HCT116 (cell line): ENCODE measurements at regions of chr5 and their contacts with region 1.

Region 1: DNA sequence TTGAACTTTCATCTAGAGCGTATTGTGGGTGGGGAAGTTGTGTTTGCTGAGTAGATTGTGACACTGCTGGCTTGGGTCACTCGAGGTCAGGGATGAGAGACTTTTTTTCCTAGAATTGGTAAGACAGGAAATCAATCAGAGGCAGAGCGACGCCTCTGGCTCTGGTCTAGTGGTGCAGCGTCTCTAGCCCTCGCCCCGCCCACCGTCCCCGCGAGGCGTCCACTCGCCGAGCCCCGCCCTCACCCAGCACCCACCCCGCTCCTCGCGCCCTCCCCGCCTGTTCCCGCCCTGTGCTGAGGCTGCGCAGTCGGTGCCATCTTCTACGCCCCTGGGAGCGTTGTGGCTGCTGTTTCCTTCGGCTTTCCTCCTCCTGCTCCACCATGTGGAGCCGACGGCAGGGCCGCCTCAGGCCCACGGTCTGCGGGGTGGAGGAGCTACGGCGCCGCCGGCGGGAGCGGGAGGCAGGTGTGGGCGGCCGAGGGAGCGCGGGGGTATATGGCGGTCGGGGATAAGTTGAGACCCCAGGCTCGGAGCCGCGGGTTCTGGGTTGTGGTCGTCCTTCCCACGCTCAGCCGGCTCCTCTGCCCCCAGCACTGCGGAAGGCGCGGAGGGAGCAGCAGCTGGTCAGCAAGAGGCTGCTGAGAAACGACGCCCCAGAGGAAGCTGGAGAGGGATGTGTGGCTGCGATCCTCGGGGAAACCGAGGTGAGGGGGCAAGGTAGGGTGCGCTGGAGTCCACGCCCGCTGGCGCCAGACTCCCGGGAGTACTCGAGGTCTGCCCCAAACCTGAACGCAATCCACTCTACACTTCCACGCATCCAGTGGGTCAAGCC is at the start of gene TMCO6:
- DNase-seq: peak; percentile 73
- ATAC-seq: peak; percentile 94
- H3K4me3 ChIP-seq: peak within 1 kb of the TSS; percentile 80 to 88
- H3K27ac ChIP-seq: peak within 1 kb of the TSS; percentile 84
- H3K4me1 ChIP-seq: peaks cover 4 to 11% of the 10 kb centered on the region in 2 experiments; a peak in 3 of 4 replicates
- H3K27me3 ChIP-seq: no peaks in the 10 kb centered on the region
- CTCF ChIP-seq: peak in 2 of 3 experiments; percentile 57; a peak in 4 of 6 replicates
- POLR2A ChIP-seq: peak; percentile 68
- RAD21 ChIP-seq: no peak
- total RNA-seq, gene TMCO6: 28.0 TPM

Region 2: GRCh38 chr5:140372971-140373487 is 266.3 kb before region 1 on chr5:
- CTCF ChIA-PET with region 1: interaction called, 5 read pairs
- POLR2A ChIA-PET with region 1: no interaction called
- RAD21 ChIA-PET with region 1: no interaction called
- intact Hi-C with region 1: loop called (anchors 5 kb)
- DNase-seq: peak; percentile 71
- ATAC-seq: peak; percentile 94
- H3K4me3 ChIP-seq: no peak overlapping the region
- H3K27ac ChIP-seq: no peak overlapping the region
- H3K4me1 ChIP-seq: peaks cover 5 to 10% of the 10 kb centered on the region in 2 experiments; a peak in 3 of 4 replicates
- H3K27me3 ChIP-seq: no peaks in the 10 kb centered on the region
- CTCF ChIP-seq: peak; percentile 68 to 88 (median 80); a peak in 5 of 6 replicates
- POLR2A ChIP-seq: no peak
- RAD21 ChIP-seq: peak; percentile 93

Region 3: GRCh38 chr5:140564196-140565023 is 75.0 kb before region 1 on chr5 and contains the starts of genes APBB3 and SLC35A4:
- CTCF ChIA-PET with region 1: interaction called, 3 read pairs
- POLR2A ChIA-PET with region 1: no interaction called
- RAD21 ChIA-PET with region 1: no interaction called
- intact Hi-C with region 1: loop called (anchors 5 kb)
- DNase-seq: peak; percentile 95
- ATAC-seq: peak; percentile 89
- H3K4me3 ChIP-seq: peak within 1 kb of the TSS; percentile 86 to 88
- H3K27ac ChIP-seq: peak within 1 kb of the TSS; percentile 63
- H3K4me1 ChIP-seq: peaks cover 7 to 19% of the 10 kb centered on the region in 2 experiments; a peak in 3 of 4 replicates
- H3K27me3 ChIP-seq: no peaks in the 10 kb centered on the region
- CTCF ChIP-seq: no peak
- POLR2A ChIP-seq: peak; percentile 54
- RAD21 ChIP-seq: no peak
- total RNA-seq, gene APBB3: 28.4 TPM
- total RNA-seq, gene SLC35A4: 37.5 TPM

Region 4: GRCh38 chr5:140575309-140575708 is 64.1 kb before region 1 on chr5:
- CTCF ChIA-PET with region 1: no interaction called
- POLR2A ChIA-PET with region 1: no interaction called
- RAD21 ChIA-PET with region 1: interaction called in 1 of 2 experiments, 3 read pairs
- intact Hi-C with region 1: loop called (anchors 5 kb)
- DNase-seq: peak; percentile 19
- ATAC-seq: peak; percentile 75
- H3K4me3 ChIP-seq: no peak overlapping the region
- H3K27ac ChIP-seq: no peak overlapping the region
- H3K4me1 ChIP-seq: no peaks in the 10 kb centered on the region
- H3K27me3 ChIP-seq: no peaks in the 10 kb centered on the region
- CTCF ChIP-seq: peak; percentile 41 to 51 (median 41); a peak in 4 of 6 replicates
- POLR2A ChIP-seq: no peak
- RAD21 ChIP-seq: peak; percentile 71